Gastrocnemius medialis (tissue), 4 donors: ENCODE measurements at regions of chr18 and their contacts with region 1.

Region 1: GRCh38 chr18:40006634-40007033 is 1948.4 kb upstream of the PIK3C3 start:
- DNase-seq: no peak
- ATAC-seq: no peak
- H3K4me3 ChIP-seq: no peak overlapping the region
- H3K27ac ChIP-seq: no peak overlapping the region
- H3K4me1 ChIP-seq: no peaks in the 10 kb centered on the region
- H3K27me3 ChIP-seq: no peaks in the 10 kb centered on the region
- CTCF ChIP-seq: no peak
- POLR2A ChIP-seq: no peak

Region 2: GRCh38 chr18:40124107-40124506 is 117.5 kb after region 1 on chr18:
- in situ Hi-C with region 1: loop called in 1 of 4 experiments (anchors 25 kb)
- intact Hi-C with region 1: no loop called
- DNase-seq: no peak
- ATAC-seq: no peak
- H3K4me3 ChIP-seq: no peak overlapping the region
- H3K27ac ChIP-seq: no peak overlapping the region
- H3K4me1 ChIP-seq: no peaks in the 10 kb centered on the region
- H3K27me3 ChIP-seq: no peaks in the 10 kb centered on the region
- CTCF ChIP-seq: no peak
- POLR2A ChIP-seq: no peak